ENCODE measurements at regions of chr1 and their contacts with region 1.

Region 1: DNA sequence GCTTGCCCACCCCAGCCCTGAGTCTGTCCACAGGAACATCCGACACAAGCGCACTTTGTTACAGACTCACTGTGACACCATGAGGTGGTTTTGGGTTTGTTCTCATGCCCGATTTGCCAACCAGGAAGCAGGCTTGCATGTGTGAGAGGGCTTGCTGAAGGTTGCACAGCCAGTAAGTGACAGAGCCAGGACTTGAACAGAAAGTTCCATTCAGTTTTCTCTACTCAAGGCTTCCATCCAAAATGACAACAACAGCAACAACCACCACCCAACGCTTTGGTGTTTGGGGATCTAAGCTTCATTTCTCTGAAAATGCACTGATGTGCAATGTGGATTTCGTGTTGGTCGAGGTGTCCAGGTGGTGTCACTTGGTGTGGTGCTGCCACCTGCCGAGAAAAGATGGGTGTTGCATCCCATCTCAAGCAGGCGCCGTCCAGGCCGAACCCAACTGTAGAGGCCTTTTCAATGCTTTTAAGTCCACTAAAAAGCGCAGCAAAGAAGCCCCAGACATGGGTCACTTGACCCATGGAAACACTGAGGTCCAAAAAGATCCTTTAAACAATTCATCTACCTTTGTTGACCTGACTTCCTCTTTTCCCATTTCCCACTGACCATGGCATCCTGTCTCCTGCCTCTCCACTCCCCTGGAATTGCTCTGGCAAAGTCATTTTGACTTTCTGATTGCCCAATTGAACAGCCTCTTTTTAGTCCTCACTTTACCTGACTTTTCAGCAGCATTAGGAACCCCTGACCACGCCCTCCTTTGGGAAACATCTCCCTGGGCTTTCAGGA is 12.2 kb downstream of the CITED4 start:
- DNase-seq: peak; percentile 81
- CTCF ChIP-seq: peak; percentile 92

Region 2: GRCh38 chr1:40802078-40802741 is 47.8 kb before region 1 on chr1:
- CTCF ChIA-PET with region 1: interaction called, 22 read pairs
- POLR2A ChIA-PET with region 1: no interaction called
- DNase-seq: peak; percentile 97
- CTCF ChIP-seq: no peak

Region 3: DNA sequence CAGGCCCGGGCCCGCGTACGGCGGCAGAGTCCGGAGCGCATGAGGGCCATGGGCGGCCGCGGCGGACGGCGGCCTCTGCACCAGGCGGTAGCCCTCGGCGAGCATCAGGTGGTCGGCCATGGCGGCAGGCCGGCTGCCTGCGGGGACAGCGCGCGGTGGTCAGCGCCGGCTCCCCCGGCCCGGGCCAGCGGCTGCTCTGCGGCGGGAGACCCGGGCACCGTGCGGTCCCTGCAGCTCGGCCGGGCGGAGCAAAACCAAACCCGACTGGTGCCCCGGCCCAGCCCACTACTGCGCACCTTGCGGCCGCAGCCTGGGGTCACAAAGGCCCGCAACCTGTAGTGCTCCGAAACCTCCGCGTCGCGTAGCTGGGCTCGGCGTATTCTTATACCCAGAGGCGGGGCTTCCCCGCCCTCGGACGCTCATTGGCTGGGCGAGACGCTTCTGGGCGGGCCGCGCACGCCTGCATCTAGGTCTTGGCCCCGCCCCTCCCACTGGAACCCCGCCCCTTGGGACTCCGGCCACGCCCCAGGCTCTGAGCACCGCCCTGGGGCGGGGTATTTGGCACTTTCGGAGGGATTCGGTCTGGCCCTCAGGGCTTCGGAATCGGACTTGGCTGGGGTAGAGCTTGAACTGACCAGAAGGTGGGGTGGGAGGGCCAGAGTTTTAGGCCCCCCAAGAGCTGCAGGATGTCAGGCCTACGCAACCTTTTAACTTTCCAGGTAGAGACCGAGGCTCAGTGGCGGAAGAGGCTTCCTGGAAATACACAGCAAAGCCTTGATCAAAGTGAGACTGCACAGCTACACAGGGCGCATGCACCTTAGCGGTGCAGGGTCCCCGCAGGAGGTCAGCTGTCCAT is 12.2 kb after region 1 on chr1 and contains the start of gene CITED4:
- CTCF ChIA-PET with region 1: interaction called, 57 read pairs
- POLR2A ChIA-PET with region 1: interaction called, 13 read pairs
- DNase-seq: peak; percentile 98
- CTCF ChIP-seq: peak; percentile 2

Region 4: GRCh38 chr1:40936931-40937339 is 86.9 kb after region 1 on chr1:
- CTCF ChIA-PET with region 1: no interaction called
- POLR2A ChIA-PET with region 1: no interaction called
- DNase-seq: no peak
- CTCF ChIP-seq: no peak

Region 5: DNA sequence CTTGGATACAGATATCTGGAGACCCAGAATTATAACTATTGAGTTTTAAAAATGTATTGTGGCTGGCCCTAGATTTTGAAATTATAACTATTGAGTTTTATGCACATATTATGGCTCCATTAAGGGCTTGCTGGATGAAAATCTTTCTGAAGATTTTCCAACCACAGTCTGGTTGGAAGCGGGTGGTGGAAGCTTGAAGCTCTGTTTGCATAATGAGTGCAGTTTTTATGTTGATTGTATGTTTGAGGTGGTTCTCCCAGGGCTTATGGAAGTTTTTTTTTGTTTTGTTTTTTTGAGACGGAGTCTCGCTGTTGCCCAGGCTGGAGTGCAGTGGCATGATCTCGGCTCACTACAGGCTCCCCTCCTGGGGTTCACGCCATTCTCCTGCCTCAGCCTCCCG is 119.4 kb after region 1 on chr1:
- CTCF ChIA-PET with region 1: no interaction called
- POLR2A ChIA-PET with region 1: no interaction called
- DNase-seq: no peak
- CTCF ChIP-seq: no peak

Measured in GM10248 (cell line).